CD4-positive, alpha-beta memory T cell (primary cell): ENCODE measurements at regions of chr1 and their contacts with region 1.

Region 1: DNA sequence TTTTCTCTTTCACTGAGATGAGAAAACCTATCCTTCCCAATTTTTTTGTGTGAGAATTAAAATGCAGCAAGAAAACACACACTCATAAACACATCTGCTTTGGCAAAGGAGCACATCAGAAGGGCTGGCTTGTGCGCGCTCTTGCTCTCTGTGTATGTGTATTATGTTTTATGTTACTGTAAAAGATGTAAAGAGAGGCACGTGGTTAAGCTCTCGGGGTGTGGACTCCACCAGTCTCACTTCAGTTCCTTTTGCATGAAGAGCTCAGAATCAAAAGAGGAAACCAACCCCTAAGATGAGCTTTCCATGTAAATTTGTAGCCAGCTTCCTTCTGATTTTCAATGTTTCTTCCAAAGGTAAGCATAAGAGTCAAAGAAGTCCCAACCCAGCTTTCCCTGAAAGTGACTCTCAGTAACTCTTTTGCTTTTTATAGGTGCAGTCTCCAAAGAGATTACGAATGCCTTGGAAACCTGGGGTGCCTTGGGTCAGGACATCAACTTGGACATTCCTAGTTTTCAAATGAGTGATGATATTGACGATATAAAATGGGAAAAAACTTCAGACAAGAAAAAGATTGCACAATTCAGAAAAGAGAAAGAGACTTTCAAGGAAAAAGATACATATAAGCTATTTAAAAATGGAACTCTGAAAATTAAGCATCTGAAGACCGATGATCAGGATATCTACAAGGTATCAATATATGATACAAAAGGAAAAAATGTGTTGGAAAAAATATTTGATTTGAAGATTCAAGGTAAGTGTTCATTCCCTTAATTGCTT is at the start of gene CD2:
- DNase-seq: peak; percentile 66 to 74 (median 71)
- H3K4me3 ChIP-seq: peak within 1 kb of the TSS; percentile 53 to 72
- H3K4me3 Mint-ChIP-seq: peak within 1 kb of the TSS; percentile 96 to 100 (median 98)
- H3K27ac ChIP-seq: peak within 1 kb of the TSS; percentile 88
- H3K27ac Mint-ChIP-seq: peak within 1 kb of the TSS; percentile 96 to 100 (median 99)
- H3K4me1 ChIP-seq: peaks cover 34% of the 10 kb centered on the region
- H3K4me1 Mint-ChIP-seq: peaks cover 25 to 64% (median 33%) of the 10 kb centered on the region in 4 donors
- H3K27me3 ChIP-seq: no peaks in the 10 kb centered on the region
- H3K27me3 Mint-ChIP-seq: no peaks in the 10 kb centered on the region
- total RNA-seq, gene CD2: 305 to 316 TPM

Region 2: DNA sequence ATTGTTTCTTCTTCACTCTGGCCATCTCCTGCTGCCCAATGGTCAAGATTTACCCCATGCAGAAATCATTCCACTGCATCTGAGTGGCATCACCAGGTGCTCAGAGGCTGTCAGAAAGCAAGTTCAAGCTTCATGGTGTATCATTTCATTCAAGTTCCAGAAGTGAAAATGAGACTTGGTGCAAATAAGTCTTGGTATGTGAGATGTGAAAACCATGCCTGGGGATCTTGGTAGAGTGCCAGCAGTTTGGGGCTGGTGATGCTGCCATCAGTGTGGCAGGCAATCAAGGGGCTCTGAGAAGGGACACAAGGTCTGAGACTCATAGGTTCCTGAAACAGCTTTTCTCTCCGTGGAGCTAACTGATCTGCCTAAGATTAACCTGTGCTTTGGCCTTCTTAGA is 51.9 kb after region 1 on chr1:
- CTCF ChIA-PET with region 1: interaction called, 11 read pairs
- POLR2A ChIA-PET with region 1: interaction called, 1,208 read pairs
- intact Hi-C with region 1: no loop called
- DNase-seq: peak in 4 of 5 donors; percentile 57 to 79 (median 58)
- H3K4me3 ChIP-seq: peak overlapping the region in 1 of 2 donors; percentile 29
- H3K4me3 Mint-ChIP-seq: peak overlapping the region; percentile 67 to 96 (median 85)
- H3K27ac ChIP-seq: peak overlapping the region; percentile 80
- H3K27ac Mint-ChIP-seq: peak overlapping the region; percentile 89 to 99 (median 98)
- H3K4me1 ChIP-seq: peaks cover 97% of the 10 kb centered on the region
- H3K4me1 Mint-ChIP-seq: peaks cover 78 to 97% (median 84%) of the 10 kb centered on the region in 4 donors
- H3K27me3 ChIP-seq: no peaks in the 10 kb centered on the region
- H3K27me3 Mint-ChIP-seq: no peaks in the 10 kb centered on the region